Heart left ventricle (tissue), 16 donors: ENCODE measurements at regions of chr1 and their contacts with region 1.

Region 1: DNA sequence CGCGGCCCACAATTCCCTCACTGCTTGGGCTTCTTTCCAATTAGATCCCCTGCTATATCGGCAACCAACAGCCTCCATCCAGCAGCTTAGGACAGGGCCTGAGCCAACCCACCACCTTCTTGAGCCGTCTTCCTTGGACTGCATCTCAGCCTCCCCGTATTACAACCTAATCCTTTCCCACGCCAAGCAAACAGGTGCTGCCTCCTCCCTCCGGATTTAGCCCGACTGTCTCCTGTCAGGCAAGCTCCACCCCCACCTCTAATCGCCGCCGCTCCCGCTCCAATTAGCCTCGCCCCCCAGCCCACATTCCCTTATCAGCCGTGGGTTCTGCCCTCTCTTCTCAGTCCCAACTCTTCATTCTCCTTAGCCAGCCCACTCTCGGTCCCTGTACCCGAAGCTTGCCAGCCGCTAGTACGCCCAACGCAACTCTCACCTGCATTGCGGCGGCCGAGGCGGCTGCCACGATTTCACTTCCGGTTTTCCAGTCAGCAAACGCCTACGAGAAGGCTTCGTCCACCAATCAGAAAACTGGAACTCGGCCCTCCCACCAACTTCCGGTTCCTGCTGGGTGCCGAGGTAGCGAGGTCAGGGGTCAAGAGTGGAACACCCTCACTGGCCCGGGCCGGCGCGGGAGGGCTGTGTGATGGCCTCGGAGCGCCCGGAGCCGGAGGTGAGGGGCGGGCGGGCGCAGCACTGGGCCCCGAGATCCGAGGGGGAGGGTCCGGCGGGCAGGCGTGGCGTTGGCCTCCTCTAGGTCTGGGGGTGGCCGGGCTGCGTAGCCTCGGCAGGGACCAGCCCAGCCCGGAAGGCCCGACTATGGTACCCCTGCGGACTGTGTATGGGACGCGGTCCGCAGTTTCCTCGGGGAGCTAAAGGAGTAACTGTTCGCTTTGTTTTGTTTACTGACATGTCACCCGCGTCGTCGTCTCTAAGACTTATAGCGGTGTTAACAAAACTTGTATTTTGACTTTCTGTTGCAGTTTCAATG is at the starts of genes MED8 and SZT2:
- DNase-seq: peak; percentile 95 to 97 (median 96)
- ATAC-seq: peak; percentile 98 to 99 (median 99)
- H3K4me3 ChIP-seq: peak within 1 kb of the TSS; percentile 51 to 98 (median 84)
- H3K27ac ChIP-seq: peak within 1 kb of the TSS; percentile 1 to 89 (median 83)
- H3K4me1 ChIP-seq: peaks cover 13 to 32% (median 26%) of the 10 kb centered on the region in 12 donors
- H3K27me3 ChIP-seq: no peaks in the 10 kb centered on the region
- CTCF ChIP-seq: no peak
- POLR2A ChIP-seq: peak; percentile 15 to 85
- total RNA-seq, gene MED8: 13.7 to 25.4 (median 16.9) TPM
- total RNA-seq, gene SZT2: 19.0 to 39.7 (median 24.4) TPM

Region 2: GRCh38 chr1:42766741-42767509 is 622.7 kb before region 1 on chr1 and contains the starts of genes C1orf50 and P3H1:
- intact Hi-C with region 1: no loop called
- DNase-seq: peak; percentile 100
- ATAC-seq: peak; percentile 96 to 99 (median 98)
- H3K4me3 ChIP-seq: peak within 1 kb of the TSS; percentile 82 to 98 (median 94)
- H3K27ac ChIP-seq: peak within 1 kb of the TSS; percentile 72 to 97 (median 92)
- H3K4me1 ChIP-seq: peaks cover 3 to 47% (median 30%) of the 10 kb centered on the region in 12 donors
- H3K27me3 ChIP-seq: no peaks in the 10 kb centered on the region
- CTCF ChIP-seq: peak in 1 of 12 donors; percentile 10
- POLR2A ChIP-seq: peak; percentile 98 to 99
- total RNA-seq, gene C1orf50: 3.0 to 9.2 (median 5.8) TPM
- total RNA-seq, gene P3H1: 6.9 to 27.9 (median 10.0) TPM

Region 3: GRCh38 chr1:42816585-42817434 is 572.8 kb before region 1 on chr1 and contains the starts of genes ERMAP and SVBP:
- intact Hi-C with region 1: no loop called
- DNase-seq: peak; percentile 93 to 98 (median 94)
- ATAC-seq: peak; percentile 90 to 99 (median 98)
- H3K4me3 ChIP-seq: peak within 1 kb of the TSS; percentile 44 to 92 (median 78)
- H3K27ac ChIP-seq: peak within 1 kb of the TSS; percentile 93 to 100 (median 98)
- H3K4me1 ChIP-seq: peaks cover 0 to 27% (median 17%) of the 10 kb centered on the region in 12 donors
- H3K27me3 ChIP-seq: no peaks in the 10 kb centered on the region
- CTCF ChIP-seq: peak in 2 of 12 donors; percentile 16 to 17
- POLR2A ChIP-seq: peak in 1 of 2 donors; percentile 49
- total RNA-seq, gene ERMAP: 2.2 to 8.2 (median 5.4) TPM
- total RNA-seq, gene SVBP: 11.5 to 22.8 (median 15.8) TPM

Region 4: GRCh38 chr1:43285269-43285990 is 104.2 kb before region 1 on chr1 and contains the start of gene C1orf210:
- intact Hi-C with region 1: no loop called
- DNase-seq: peak in 1 of 5 donors; percentile 5
- ATAC-seq: peak in 1 of 4 donors; percentile 17
- H3K4me3 ChIP-seq: no peak within 1 kb of the TSS
- H3K27ac ChIP-seq: no peak within 1 kb of the TSS
- H3K4me1 ChIP-seq: peaks cover 0 to 3% (median 0%) of the 10 kb centered on the region in 12 donors
- H3K27me3 ChIP-seq: no peaks in the 10 kb centered on the region
- CTCF ChIP-seq: no peak
- POLR2A ChIP-seq: no peak
- total RNA-seq, gene C1orf210: not detected

Region 5: DNA sequence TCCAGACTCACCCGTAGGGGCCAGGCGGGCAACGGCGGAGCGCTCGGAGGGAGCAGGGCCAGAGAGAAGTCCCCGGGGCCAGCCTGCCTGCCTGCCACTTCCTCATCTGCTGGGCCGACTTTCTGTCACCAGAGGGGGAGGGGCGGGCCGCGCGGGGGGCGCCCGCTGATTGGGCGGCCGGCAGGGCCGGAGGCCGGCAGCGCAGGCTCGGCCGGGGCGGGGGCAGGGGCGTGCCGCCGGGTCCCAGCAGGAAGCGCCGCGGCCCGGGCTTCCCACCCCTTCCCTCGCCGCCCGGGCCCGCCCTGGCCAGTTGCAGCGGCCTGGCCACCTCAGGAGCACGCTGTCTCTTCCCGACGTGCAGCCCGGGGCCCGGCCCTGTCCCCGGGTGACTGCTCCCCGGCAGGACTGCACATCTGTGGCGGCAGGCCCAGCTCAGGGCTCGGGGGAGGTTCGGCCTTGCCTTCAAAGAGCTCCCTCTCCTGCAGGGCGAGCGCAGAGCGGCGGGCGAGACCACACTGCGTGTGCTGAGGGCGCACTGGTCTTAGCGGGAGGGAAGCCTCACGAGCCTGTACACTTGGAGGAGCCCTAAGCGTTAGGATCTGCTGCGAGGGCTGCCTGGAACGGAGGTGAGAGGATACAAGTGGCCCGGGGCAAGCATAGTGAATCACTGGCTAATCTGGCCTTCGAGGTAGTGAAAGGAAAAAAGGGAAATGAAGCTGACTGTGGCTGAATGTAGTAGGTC is 21.5 kb before region 1 on chr1 and contains the start of gene ELOVL1:
- intact Hi-C with region 1: loop called in 2 of 10 experiments (anchors 2 kb)
- DNase-seq: peak; percentile 95 to 97 (median 95)
- ATAC-seq: peak; percentile 86 to 97 (median 94)
- H3K4me3 ChIP-seq: peak within 1 kb of the TSS; percentile 54 to 97 (median 90)
- H3K27ac ChIP-seq: peak within 1 kb of the TSS; percentile 91 to 99 (median 97)
- H3K4me1 ChIP-seq: peaks cover under 1 to 38% (median 28%) of the 10 kb centered on the region in 12 donors
- H3K27me3 ChIP-seq: no peaks in the 10 kb centered on the region
- CTCF ChIP-seq: peak in 5 of 12 donors; percentile 18 to 62 (median 39)
- POLR2A ChIP-seq: peak in 1 of 2 donors; percentile 93
- total RNA-seq, gene ELOVL1: 22.1 to 63.5 (median 33.6) TPM

Region 6: DNA sequence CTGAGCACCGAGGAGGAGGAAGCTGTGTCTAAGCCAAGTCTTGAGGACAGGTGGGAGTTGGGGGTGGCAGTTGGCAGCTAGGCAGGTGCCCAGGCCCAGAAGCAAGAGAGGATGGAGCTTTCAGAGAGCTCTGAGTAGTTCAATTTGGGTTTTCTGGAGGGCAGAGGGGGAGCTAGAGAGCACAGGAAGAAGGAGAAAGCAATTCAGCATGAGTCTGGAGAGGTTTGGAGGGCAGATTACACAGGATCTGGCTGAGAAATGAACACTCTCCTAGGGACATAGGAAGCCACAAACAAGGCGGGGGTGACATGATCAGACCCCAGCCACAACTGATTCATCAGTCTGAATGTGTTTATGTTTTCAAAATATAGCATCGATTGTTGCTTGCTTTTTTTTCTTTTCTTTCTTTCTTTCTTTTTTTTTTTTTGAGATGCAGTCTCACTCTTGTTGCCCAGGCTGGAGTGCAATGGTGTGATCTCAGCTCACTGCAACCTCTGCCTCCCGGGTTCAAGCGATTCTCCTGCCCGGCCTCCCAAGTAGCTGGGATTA is 164.9 kb after region 1 on chr1:
- intact Hi-C with region 1: no loop called
- DNase-seq: no peak
- ATAC-seq: no peak
- H3K4me3 ChIP-seq: no peak overlapping the region
- H3K27ac ChIP-seq: peak overlapping the region in 1 of 12 donors; percentile 69
- H3K4me1 ChIP-seq: peaks cover 0 to 19% (median 0%) of the 10 kb centered on the region in 12 donors
- H3K27me3 ChIP-seq: no peaks in the 10 kb centered on the region
- CTCF ChIP-seq: peak in 5 of 12 donors; percentile 18 to 33 (median 26)
- POLR2A ChIP-seq: no peak